ENCODE measurements at regions of chr14 and their contacts with region 1.

Region 1: DNA sequence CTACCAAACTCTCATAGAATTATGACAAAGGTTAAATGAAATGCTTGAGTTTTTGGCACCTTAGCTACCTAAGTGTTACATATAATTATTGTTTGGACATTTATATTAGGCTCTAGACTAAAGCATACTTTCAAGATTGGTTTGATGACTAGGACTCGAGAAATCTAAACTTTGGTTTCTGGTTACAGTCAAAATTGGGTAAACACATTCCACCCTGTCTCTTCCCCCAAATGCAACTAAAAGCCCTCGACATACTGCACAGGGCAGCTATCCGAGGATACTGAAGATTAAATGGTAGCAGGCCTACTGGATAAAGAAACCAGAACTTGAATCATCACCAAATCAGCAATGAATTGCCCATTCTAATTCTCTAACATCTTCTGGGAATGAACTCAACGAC is 369.1 kb downstream of the PRKD1 start:
- DNase-seq: no peak
- ATAC-seq: no peak
- H3K4me3 ChIP-seq: no peak overlapping the region
- H3K27ac ChIP-seq: no peak overlapping the region
- H3K4me1 ChIP-seq: no peaks in the 10 kb centered on the region
- H3K27me3 ChIP-seq: no peaks in the 10 kb centered on the region
- CTCF ChIP-seq: no peak
- EP300 ChIP-seq: no peak
- POLR2A ChIP-seq: no peak
- RAD21 ChIP-seq: no peak

Region 2: DNA sequence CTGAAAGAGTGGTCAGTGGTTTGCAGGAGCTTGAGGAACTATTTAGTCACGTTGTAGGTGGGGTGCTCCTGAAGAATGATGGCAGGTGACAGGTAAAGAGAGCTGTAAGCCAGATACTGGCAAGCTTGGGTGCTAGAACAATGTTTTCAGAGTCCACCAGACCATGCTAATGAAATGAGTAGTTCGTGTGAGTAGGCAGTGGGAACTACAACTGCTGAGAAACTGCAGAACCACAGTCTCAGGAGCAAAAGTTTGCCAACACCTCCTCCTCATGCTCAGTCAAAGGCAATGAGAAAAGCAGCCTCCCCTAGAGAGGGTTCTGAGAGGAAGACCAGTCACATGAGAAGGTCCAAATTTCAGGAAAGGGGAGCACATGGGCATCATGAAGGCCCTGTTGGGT is 277.9 kb after region 1 on chr14:
- CTCF ChIA-PET with region 1: no interaction called
- POLR2A ChIA-PET with region 1: no interaction called
- RAD21 ChIA-PET with region 1: no interaction called
- SMC1A ChIA-PET with region 1: no interaction called
- in situ Hi-C with region 1: no loop called
- intact Hi-C with region 1: no loop called
- DNase-seq: peak; percentile 3
- ATAC-seq: no peak
- H3K4me3 ChIP-seq: no peak overlapping the region
- H3K27ac ChIP-seq: no peak overlapping the region
- H3K4me1 ChIP-seq: no peaks in the 10 kb centered on the region
- H3K27me3 ChIP-seq: no peaks in the 10 kb centered on the region
- CTCF ChIP-seq: no peak
- EP300 ChIP-seq: no peak
- POLR2A ChIP-seq: no peak
- RAD21 ChIP-seq: no peak

Region 3: GRCh38 chr14:30005114-30005808 is 446.7 kb after region 1 on chr14:
- CTCF ChIA-PET with region 1: no interaction called
- POLR2A ChIA-PET with region 1: no interaction called
- RAD21 ChIA-PET with region 1: no interaction called
- SMC1A ChIA-PET with region 1: no interaction called
- in situ Hi-C with region 1: loop called (anchors 10 kb)
- intact Hi-C with region 1: no loop called
- DNase-seq: no peak
- ATAC-seq: peak; percentile 55
- H3K4me3 ChIP-seq: no peak overlapping the region
- H3K27ac ChIP-seq: no peak overlapping the region
- H3K4me1 ChIP-seq: no peaks in the 10 kb centered on the region
- H3K27me3 ChIP-seq: no peaks in the 10 kb centered on the region
- CTCF ChIP-seq: peak; percentile 41 to 48 (median 45); a peak in 5 of 6 replicates
- EP300 ChIP-seq: no peak
- POLR2A ChIP-seq: no peak
- RAD21 ChIP-seq: peak; percentile 66